Pancreas (tissue), 10 donors: ENCODE measurements at regions of chr4 and their contacts with region 1.

Region 1: DNA sequence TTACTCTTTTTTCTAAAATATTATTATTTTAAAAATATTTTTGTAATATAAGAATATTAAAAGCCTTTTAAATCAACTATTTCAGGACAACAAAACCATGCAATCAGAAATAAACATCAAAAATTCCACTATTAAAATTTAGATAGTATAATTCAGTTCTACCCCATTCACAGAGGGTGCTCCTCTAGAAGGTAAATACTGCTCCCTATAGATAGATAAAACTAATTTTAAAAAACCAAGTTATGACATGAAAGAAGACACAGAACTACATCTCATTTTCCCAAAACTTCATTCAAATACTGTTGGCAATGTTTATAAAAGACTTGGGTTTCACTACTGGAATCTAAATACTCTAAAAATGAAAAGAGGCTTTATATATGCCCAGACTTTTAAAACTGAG is 219.3 kb downstream of the SPOCK3 start:
- DNase-seq: no peak
- ATAC-seq: no peak
- H3K4me3 ChIP-seq: no peak overlapping the region
- H3K27ac ChIP-seq: no peak overlapping the region
- H3K4me1 ChIP-seq: no peaks in the 10 kb centered on the region
- H3K27me3 ChIP-seq: peaks cover 0 to 6% (median 0%) of the 10 kb centered on the region in 4 donors
- CTCF ChIP-seq: no peak

Region 2: DNA sequence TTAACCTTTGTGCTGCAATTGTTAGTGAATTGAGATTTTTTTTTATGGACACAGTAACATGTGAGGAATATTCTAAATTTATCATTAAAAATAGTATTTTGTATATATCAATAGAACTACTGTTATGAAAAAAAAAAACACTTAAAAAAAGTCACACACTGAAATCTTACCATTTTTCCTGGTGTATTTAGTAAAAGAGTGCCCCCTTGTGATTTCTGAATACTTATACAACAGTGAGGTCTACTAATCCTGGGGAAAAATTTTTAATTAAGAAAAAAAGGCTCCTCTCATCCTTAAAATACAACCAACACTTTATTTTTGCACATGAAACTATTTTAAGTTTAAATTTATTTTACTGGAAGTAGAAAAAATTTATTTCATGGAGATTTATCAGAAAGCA is 275.7 kb after region 1 on chr4:
- intact Hi-C with region 1: loop called in 1 of 3 experiments (anchors 10 kb)
- DNase-seq: no peak
- ATAC-seq: no peak
- H3K4me3 ChIP-seq: no peak overlapping the region
- H3K27ac ChIP-seq: no peak overlapping the region
- H3K4me1 ChIP-seq: no peaks in the 10 kb centered on the region
- H3K27me3 ChIP-seq: no peaks in the 10 kb centered on the region
- CTCF ChIP-seq: peak in 1 of 4 donors; percentile 5